PC-3 (cell line): ENCODE measurements at regions of chr14 and their contacts with region 1.

Region 1: GRCh38 chr14:23110579-23111365 is 6.0 kb upstream of the CIROP start:
- DNase-seq: no peak
- ATAC-seq: no peak
- H3K4me3 ChIP-seq: no peak overlapping the region
- H3K27ac ChIP-seq: no peak overlapping the region
- H3K4me1 ChIP-seq: peaks cover 20% of the 10 kb centered on the region
- H3K27me3 ChIP-seq: peaks cover 22% of the 10 kb centered on the region
- CTCF ChIP-seq: no peak

Region 2: DNA sequence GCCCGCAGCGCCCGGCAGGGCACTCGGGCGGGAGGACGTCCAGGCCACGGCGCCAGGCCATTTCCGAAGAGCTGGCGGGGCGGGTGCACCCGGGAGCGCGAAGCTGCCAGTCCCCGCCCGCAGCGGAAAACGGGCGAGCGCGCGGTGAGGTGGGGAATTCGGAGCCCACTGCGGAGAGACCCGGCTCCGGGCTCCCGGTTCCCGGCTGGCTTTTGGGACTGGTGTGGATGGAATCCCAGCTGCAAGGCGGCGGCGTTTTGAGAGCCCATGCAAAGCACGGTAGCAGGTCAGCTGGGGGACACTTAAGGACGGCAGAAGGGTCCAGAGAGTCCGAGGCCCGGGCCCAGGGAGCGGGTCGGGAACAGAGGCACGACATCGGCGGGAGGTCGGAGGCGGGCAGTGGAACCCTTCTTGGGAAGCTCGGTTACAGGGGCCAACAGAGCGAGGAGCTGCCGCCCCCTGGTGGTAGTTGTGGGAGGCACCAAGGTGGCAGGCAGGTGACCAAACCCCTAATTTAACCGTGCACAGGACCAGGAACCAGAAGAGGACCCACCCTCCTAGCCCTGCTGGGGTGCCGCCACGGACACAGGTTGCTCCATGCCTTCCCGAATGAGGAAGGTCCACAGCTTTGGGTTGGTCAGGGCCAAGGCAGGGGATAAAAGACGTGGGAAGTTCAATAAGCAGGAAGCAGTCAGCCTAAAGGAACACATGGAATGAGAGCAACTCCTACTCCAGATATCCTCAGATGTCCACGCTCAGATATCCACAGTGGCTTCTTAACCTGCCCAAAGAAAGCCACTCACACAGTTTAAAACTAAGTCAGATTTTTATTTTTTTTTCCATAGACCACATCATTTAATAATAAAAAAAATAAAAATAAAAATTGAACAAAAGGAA is 52.8 kb before region 1 on chr14:
- CTCF ChIA-PET with region 1: no interaction called
- POLR2A ChIA-PET with region 1: no interaction called
- intact Hi-C with region 1: loop called (anchors 1 kb)
- DNase-seq: peak; percentile 90
- ATAC-seq: peak; percentile 69
- H3K4me3 ChIP-seq: peak overlapping the region; percentile 85
- H3K27ac ChIP-seq: no peak overlapping the region
- H3K4me1 ChIP-seq: peaks cover 21% of the 10 kb centered on the region
- H3K27me3 ChIP-seq: no peaks in the 10 kb centered on the region
- CTCF ChIP-seq: peak; percentile 94

Region 3: DNA sequence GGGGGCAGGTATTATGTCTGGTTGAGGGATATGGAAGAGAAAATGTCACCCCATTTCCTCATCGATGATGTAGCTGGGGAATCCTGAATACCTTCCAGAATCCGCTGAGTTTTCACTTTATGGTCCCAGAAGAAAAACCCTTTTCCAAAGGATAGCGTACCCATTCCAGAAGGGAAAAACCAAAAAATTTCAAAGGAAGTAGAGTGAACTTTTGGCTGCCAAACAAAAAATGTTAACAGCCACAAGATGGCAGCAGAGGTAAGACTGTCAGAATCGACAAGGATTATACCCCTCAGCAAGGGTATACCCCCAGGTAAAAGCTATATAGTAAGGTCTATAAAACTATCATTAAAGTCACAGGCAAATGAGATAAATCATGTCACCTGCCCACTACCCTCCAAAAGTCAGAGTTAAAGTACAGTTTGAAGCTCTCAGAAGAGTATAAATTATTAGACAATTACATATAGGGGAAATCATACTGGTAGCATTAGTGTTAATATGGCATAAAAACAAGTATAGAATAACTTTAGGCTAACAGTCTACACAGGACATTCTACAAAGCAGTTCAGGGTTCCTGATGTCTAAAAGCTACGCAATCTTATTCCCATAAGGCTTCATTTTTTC is 33.9 kb before region 1 on chr14:
- CTCF ChIA-PET with region 1: interaction called, 6 read pairs
- POLR2A ChIA-PET with region 1: interaction called, 3 read pairs
- intact Hi-C with region 1: loop called (anchors 2 kb)
- DNase-seq: peak; percentile 62
- ATAC-seq: no peak
- H3K4me3 ChIP-seq: no peak overlapping the region
- H3K27ac ChIP-seq: no peak overlapping the region
- H3K4me1 ChIP-seq: peaks cover 38% of the 10 kb centered on the region
- H3K27me3 ChIP-seq: no peaks in the 10 kb centered on the region
- CTCF ChIP-seq: peak; percentile 83; the same call in 1 of the 2 replicates